ENCODE measurements at regions of chr15 and their contacts with region 1.

Region 1: DNA sequence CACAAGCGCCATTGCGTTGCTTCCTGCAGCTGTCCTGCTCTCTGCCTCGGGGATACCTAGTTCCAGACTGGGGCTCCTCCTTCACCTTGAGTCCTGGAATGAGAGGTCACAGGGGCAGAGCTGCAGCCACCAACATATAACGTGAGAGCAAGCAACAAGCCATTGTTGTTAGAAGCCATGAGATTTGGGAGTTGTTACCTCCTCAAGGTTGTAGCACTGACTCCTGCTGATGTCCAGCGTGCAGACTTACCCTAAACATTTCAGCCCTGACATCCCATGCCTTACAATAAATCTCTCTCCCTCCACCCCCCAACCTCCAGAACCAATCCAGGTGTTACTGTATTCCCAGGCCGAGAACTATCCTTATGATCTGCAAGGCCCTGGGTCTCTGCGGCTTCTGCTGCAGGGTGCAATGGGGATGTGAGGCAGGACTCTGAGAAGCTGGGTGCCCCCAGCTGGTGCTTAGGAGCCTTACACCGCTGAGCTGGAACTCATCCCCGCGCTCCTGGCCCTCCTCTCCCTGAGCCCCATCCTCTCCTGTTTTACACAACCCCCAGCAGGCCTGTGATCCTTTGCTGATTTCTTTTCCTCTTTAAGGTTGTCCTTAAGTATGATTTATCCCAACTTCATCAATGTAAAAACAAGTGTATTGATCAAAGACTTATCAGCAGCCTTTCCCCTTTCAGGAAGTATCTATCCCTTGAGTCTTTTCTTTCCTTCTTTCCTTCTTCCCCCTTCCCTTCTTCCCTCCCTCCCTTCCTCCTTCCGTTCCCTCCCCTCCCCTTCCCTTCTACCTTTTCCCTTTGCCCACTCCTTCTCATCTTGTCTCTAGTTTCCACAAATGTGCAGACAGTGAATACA is 84.2 kb upstream of the ABHD2 start:
- DNase-seq: no peak
- ATAC-seq: peak; percentile 92
- H3K4me3 ChIP-seq: no peak overlapping the region
- H3K27ac ChIP-seq: no peak overlapping the region
- H3K4me1 ChIP-seq: no peaks in the 10 kb centered on the region
- H3K27me3 ChIP-seq: no peaks in the 10 kb centered on the region
- CTCF ChIP-seq: peak; percentile 32 to 46 (median 36); a peak in 5 of 6 replicates
- POLR2A ChIP-seq: no peak
- RAD21 ChIP-seq: peak; percentile 58

Region 2: DNA sequence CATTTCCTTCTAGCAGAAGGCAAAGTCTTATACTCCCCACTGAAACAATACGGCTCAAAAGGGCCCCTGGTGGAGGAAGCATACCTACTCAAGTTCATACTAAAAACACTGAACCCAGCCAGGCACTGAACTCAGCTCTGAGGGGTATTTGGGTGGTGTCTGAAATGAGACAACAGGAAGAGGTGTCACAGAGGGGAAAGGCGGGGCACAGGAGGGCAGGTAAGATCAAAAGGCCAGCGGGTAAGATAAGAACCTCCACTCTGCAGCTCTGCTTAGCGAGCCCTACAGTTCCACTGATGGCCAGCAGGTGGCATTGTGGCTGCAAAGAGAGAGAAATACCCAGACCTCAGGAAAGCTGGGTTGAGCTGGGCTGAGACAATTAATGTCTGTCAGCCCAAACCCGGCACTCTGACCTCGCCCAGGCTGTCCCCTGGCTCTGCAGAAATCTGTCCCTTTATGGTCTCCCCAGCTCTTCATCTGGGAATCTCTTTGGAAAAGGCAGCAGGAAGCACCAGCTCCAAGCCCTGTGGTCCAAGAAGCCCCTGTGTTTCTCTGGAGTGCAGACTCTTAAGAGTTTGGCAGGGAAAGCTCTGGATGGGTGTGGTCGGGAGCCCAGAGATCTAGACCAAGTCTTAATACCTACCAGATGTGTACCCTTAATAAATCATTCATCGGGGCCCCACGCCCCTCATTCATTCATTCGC is 99.3 kb before region 1 on chr15:
- CTCF ChIA-PET with region 1: interaction called, 38 read pairs
- POLR2A ChIA-PET with region 1: no interaction called
- RAD21 ChIA-PET with region 1: interaction called, 5 to 6 read pairs
- intact Hi-C with region 1: no loop called
- DNase-seq: no peak
- ATAC-seq: peak; percentile 90
- H3K4me3 ChIP-seq: no peak overlapping the region
- H3K27ac ChIP-seq: no peak overlapping the region
- H3K4me1 ChIP-seq: peaks cover 7 to 28% of the 10 kb centered on the region in 2 experiments; a peak in 3 of 4 replicates
- H3K27me3 ChIP-seq: no peaks in the 10 kb centered on the region
- CTCF ChIP-seq: peak; percentile 94 to 97 (median 97)
- POLR2A ChIP-seq: no peak
- RAD21 ChIP-seq: peak; percentile 94

Region 3: GRCh38 chr15:89101302-89102191 is 97.5 kb after region 1 on chr15:
- CTCF ChIA-PET with region 1: no interaction called
- POLR2A ChIA-PET with region 1: no interaction called
- RAD21 ChIA-PET with region 1: no interaction called
- intact Hi-C with region 1: no loop called
- DNase-seq: peak; percentile 87
- ATAC-seq: peak; percentile 84
- H3K4me3 ChIP-seq: peak overlapping the region in 1 of 2 experiments; percentile 40; a peak in 2 of 4 replicates
- H3K27ac ChIP-seq: peak overlapping the region; percentile 42; the same call in 1 of the 2 replicates
- H3K4me1 ChIP-seq: peaks cover 33 to 59% of the 10 kb centered on the region in 2 experiments
- H3K27me3 ChIP-seq: no peaks in the 10 kb centered on the region
- CTCF ChIP-seq: no peak
- POLR2A ChIP-seq: no peak
- RAD21 ChIP-seq: no peak